SK-N-SH (cell line): ENCODE measurements at regions of chr5 and their contacts with region 1.

Region 1: DNA sequence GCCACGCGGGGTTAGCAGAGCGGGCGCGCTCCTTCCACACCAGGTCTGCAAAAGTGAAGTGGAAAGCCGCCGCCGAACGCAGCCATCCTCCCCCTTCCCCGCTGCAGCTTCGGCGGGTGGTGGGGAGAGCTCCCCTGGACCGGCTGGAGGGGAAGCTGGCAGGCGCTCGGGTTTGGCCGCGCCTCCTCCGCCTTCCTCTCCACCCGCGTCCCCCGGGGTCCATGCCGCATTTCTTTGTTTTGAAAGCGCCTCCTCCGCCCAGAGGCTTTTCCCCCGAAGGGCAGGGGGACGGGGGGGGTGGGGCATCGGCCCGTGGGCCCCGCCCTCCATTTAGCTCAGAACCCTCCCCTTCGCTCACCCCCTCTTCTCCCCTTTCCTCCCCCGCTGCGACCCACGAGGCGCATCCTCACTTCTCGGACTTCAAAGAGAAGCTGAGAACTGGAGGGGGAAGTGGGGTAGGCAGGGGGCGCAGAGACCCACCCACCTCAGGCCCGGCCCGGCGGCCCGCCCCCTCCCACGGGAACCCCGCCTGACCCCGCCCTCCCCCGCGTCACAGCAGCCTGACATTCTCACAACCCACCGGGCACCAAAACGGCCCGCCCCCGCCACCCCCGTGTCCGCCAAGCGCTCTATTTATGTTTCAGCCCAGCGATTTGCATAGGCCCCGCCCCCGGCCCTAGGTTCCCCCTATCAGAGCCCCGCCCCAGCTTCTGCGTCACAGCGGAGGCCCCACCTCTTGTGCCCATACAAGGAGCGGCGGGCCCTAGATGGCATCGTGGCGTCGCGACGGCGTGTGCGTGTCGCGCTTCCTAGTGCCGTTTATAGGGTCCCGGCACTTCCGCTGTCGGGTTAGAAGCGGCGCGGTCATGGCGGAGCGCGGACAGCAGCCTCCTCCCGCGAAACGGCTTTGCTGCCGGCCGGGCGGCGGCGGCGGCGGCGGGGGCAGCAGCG is at the start of gene ZSWIM6:
- DNase-seq: peak; percentile 96
- H3K4me3 ChIP-seq: peak within 1 kb of the TSS; percentile 94 to 95
- H3K27ac ChIP-seq: peak within 1 kb of the TSS; percentile 93 to 95
- H3K4me1 ChIP-seq: peaks cover 17 to 21% of the 10 kb centered on the region in 2 experiments; a peak in 3 of 4 replicates
- H3K27me3 ChIP-seq: no peaks in the 10 kb centered on the region
- CTCF ChIP-seq: no peak
- EP300 ChIP-seq: peak; percentile 23 to 43; a peak in 2 of 4 replicates
- RAD21 ChIP-seq: peak; percentile 20; the same call in 1 of the 2 replicates
- polyA plus RNA-seq, gene ZSWIM6: 7.4 and 9.8 TPM in 2 replicates

Region 2: DNA sequence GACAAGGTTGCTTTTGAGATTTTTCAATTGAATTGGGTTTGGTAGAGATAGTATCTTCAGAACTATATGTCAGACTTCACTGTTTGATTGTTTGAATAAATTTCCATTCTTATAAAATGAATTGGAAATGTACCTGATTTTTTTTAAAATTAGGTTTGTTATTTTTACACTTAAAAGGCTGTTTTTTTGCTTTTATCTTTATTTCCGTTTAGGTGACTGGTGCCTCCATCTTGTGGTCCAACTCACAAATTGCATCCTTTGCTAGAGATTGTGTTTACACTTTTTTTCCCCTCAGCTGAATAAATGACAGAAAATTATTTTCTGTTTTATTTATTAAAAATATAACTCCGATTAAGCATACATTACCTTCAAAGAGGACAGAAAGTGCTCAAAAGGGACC is 371.1 kb before region 1 on chr5:
- CTCF ChIA-PET with region 1: interaction called, 22 read pairs
- POLR2A ChIA-PET with region 1: no interaction called
- DNase-seq: peak; percentile 23
- H3K4me3 ChIP-seq: no peak overlapping the region
- H3K27ac ChIP-seq: no peak overlapping the region
- H3K4me1 ChIP-seq: peaks cover 6 to 7% of the 10 kb centered on the region in 2 experiments; a peak in 3 of 4 replicates
- H3K27me3 ChIP-seq: no peaks in the 10 kb centered on the region
- CTCF ChIP-seq: peak; percentile 67
- EP300 ChIP-seq: no peak
- RAD21 ChIP-seq: peak; percentile 54

Region 3: DNA sequence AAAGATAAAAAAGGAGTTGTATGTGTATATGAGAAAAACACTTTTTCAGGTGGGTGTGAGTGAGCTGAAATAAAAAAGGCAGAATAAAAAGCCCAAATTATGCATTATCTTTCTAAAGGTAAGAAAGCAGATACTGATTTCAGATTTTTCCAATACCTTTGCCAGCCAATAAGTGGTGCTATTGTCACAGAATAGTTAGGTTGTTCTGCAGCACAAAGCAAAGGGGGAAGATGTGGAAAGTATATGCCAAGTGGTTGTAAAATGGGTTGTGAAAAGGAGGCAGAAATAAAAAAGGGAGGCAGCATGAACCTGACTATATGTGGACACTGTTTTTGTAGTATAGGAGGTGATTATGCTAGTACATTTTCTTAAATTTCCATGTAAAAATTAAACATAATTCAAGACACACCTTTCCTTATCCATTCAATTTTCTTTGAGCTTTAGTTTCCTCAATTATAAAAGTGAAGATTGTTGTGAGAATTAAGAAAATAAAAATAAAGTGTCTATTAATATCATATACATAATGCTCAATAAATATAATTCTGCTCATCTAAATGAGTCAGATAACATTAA is 276.2 kb before region 1 on chr5:
- CTCF ChIA-PET with region 1: interaction called, 14 read pairs
- POLR2A ChIA-PET with region 1: no interaction called
- DNase-seq: peak; percentile 41
- H3K4me3 ChIP-seq: no peak overlapping the region; a peak in 1 of 4 replicates
- H3K27ac ChIP-seq: no peak overlapping the region
- H3K4me1 ChIP-seq: peaks cover 0 to 17% of the 10 kb centered on the region in 2 experiments; a peak in 2 of 4 replicates
- H3K27me3 ChIP-seq: no peaks in the 10 kb centered on the region
- CTCF ChIP-seq: peak; percentile 71
- EP300 ChIP-seq: no peak
- RAD21 ChIP-seq: peak; percentile 90

Region 4: DNA sequence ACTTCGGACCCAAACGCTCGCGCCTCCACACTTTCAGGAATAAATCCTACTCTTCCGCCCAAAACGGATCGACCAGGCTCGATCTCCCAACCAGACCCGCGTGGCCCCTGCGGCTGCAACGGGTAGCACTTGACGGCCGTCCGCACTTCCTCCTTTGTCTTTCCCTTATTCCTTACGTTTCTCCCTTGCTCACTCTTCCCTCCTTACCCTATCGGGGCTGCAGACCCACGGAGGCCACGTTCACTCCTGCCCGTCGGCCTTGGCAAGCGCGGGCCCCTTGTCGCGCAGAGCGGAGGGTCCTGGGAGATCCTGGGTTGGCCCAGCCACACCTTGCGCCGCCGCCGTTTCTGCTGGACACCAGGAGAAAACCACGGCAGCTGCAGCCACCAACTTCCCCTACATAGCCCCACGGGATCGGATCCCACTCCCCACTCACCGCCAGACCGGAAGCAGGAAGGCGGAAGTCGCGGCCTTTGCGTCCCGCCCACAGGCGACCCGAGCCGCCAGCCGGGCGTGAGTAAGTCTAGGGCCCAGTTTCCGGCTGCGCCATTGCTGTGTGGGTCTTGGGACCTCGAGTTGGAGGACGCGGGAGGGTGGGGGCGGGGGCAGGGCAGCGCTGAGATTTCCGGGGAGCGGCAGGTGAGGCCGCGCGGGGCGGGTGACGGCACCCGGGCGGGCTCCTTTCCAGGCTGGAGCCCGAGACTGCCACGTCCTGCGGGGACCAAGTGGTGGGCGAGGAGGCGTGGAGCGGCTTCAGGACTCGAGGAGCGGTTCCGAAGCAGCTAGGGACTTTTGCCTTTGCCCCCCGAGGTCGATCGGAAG is 169.5 kb before region 1 on chr5 and contains the start of gene SMIM15:
- CTCF ChIA-PET with region 1: interaction called, 5 read pairs
- POLR2A ChIA-PET with region 1: interaction called, 27 read pairs
- DNase-seq: peak; percentile 96
- H3K4me3 ChIP-seq: peak within 1 kb of the TSS; percentile 94 to 97
- H3K27ac ChIP-seq: peak within 1 kb of the TSS; percentile 94 to 96
- H3K4me1 ChIP-seq: peaks cover 3 to 13% of the 10 kb centered on the region in 2 experiments; a peak in 3 of 4 replicates
- H3K27me3 ChIP-seq: no peaks in the 10 kb centered on the region
- CTCF ChIP-seq: no peak
- EP300 ChIP-seq: peak; percentile 8 to 41; a peak in 1 of 4 replicates
- RAD21 ChIP-seq: peak; percentile 12
- polyA plus RNA-seq, gene SMIM15: 40.3 and 51.1 TPM in 2 replicates

Region 5: GRCh38 chr5:61311837-61312808 is 19.6 kb before region 1 on chr5:
- CTCF ChIA-PET with region 1: no interaction called
- POLR2A ChIA-PET with region 1: no interaction called
- DNase-seq: no peak
- H3K4me3 ChIP-seq: no peak overlapping the region
- H3K27ac ChIP-seq: peak overlapping the region in 1 of 2 experiments; percentile 87; a peak in 2 of 4 replicates
- H3K4me1 ChIP-seq: peaks cover 11 to 47% of the 10 kb centered on the region in 2 experiments
- H3K27me3 ChIP-seq: no peaks in the 10 kb centered on the region
- CTCF ChIP-seq: no peak
- EP300 ChIP-seq: no peak
- RAD21 ChIP-seq: no peak

Region 6: DNA sequence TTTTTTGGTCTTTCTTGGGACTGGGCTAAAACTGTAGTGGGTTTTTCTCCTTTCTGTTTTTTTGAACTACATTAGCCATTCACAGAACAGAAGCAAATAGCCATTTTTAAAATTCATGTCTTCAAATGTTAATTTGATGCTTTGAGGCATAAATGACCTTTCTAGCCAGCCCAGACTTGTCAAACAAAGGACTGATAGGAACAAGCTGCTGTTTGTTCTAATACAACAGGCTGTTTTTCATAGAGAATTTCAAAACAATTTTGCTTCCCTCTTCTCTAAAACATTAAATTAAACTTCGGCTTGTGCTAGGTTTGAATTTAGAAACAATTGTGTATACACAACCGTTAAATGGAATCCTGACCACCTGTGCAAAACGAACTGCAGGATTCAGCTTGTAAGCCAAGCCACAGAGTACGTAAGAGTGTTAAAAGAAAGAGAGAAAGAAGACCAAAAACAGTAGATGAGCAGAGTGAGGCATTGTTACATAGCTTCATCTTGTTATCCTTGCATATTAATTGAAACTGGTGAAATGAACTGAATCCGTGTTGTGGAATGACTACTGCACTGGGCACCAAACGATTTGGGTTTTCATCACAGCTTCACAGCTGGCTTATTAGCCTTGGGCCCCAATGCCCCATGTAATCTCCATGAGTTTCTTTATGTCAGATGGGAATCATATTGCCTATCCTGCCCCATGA is 100.4 kb after region 1 on chr5:
- CTCF ChIA-PET with region 1: no interaction called
- POLR2A ChIA-PET with region 1: no interaction called
- DNase-seq: no peak
- H3K4me3 ChIP-seq: no peak overlapping the region
- H3K27ac ChIP-seq: 0 out of 4 replicates have a peak overlapping the region, but pooled peaks of 1 of the 2 experiments have one; percentile 5
- H3K4me1 ChIP-seq: peaks cover 0 to 2% of the 10 kb centered on the region in 2 experiments; a peak in 2 of 4 replicates
- H3K27me3 ChIP-seq: no peaks in the 10 kb centered on the region
- CTCF ChIP-seq: no peak
- EP300 ChIP-seq: no peak
- RAD21 ChIP-seq: no peak